GM12878 (cell line): ENCODE measurements at regions of chr9 and their contacts with region 1.

Region 1: DNA sequence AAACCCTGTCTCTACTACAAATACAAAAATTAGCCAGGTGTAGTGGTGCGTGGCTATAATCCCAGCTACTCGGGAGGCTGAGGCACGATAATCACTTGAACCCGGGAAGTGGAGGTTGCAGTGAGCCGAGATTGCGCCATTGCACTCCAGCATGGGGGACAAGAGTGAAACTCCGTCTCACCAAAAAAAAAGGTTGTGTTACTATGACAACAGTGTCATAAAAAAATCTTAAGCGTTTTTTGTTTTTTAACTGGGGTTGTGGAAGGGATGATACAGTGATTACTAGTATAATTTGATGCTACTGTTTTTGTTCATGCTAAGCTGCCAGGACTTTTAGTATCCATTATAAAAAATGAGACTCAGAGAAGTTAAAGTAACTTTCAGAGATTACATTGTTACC is 51.4 kb downstream of the C9orf85 start:
- DNase-seq: no peak
- ATAC-seq: no peak
- H3K4me3 ChIP-seq: no peak overlapping the region
- H3K27ac ChIP-seq: no peak overlapping the region
- H3K4me1 ChIP-seq: no peaks in the 10 kb centered on the region
- H3K27me3 ChIP-seq: no peaks in the 10 kb centered on the region
- CTCF ChIP-seq: no peak
- EP300 ChIP-seq: no peak
- POLR2A ChIP-seq: no peak
- RAD21 ChIP-seq: no peak

Region 2: GRCh38 chr9:71891557-71892189 is 71.2 kb before region 1 on chr9:
- CTCF ChIA-PET with region 1: no interaction called
- POLR2A ChIA-PET with region 1: interaction called, 10 read pairs
- RAD21 ChIA-PET with region 1: no interaction called
- SMC1A ChIA-PET with region 1: no interaction called
- in situ Hi-C with region 1: no loop called
- intact Hi-C with region 1: no loop called
- DNase-seq: no peak
- ATAC-seq: peak; percentile 45; the same call in 2 of the 3 replicates
- H3K4me3 ChIP-seq: no peak overlapping the region
- H3K27ac ChIP-seq: no peak overlapping the region; the same call in 1 of the 2 replicates
- H3K4me1 ChIP-seq: peaks cover 15% of the 10 kb centered on the region
- H3K27me3 ChIP-seq: no peaks in the 10 kb centered on the region
- CTCF ChIP-seq: no peak
- EP300 ChIP-seq: no peak
- POLR2A ChIP-seq: no peak
- RAD21 ChIP-seq: no peak

Region 3: GRCh38 chr9:72038890-72039410 is 76.1 kb after region 1 on chr9:
- CTCF ChIA-PET with region 1: no interaction called
- POLR2A ChIA-PET with region 1: no interaction called
- RAD21 ChIA-PET with region 1: no interaction called
- SMC1A ChIA-PET with region 1: no interaction called
- in situ Hi-C with region 1: no loop called
- intact Hi-C with region 1: no loop called
- DNase-seq: peak; percentile 45
- ATAC-seq: peak; percentile 95
- H3K4me3 ChIP-seq: no peak overlapping the region
- H3K27ac ChIP-seq: no peak overlapping the region
- H3K4me1 ChIP-seq: no peaks in the 10 kb centered on the region; the same call in 1 of the 2 replicates
- H3K27me3 ChIP-seq: no peaks in the 10 kb centered on the region
- CTCF ChIP-seq: peak; percentile 93 to 96 (median 94)
- EP300 ChIP-seq: no peak
- POLR2A ChIP-seq: no peak
- RAD21 ChIP-seq: peak; percentile 95